Mammary epithelial cell (primary cell): ENCODE measurements at regions of chr10 and their contacts with region 1.

Region 1: DNA sequence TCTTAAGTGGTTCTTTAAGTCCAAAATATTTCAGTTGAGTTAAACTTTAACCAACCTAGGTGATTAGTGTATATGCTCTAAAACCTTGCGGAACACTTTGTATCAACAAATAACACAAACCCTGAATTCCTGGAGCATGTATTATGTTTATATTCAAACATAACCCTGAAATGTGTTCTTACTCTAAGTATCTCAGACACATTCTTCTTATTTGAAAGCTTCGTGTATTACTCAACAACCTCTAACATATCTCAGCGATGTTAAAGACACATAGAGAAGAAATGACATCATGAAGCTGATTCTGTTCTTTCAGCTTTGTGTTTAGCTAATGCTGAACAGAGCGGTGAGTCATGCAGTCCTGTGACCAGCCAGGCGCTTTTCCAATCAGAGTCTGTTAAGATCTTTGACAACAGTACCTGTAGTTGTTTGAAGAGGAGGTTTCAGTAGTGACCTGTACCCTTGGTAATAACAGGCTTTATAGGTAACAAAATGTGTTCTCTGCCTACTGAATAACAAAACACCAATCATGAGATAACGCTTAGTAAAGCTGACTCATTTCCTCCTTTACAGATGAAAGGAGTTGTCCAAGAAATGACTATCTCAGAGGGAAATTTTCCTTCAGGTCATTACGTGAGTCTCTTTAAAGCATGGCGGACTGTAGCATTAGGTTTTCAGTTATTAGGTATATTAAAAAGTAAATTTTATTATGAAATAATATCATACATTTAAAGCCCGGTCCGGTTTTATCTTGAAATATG is 67.3 kb upstream of the KLF6 start:
- DNase-seq: peak; percentile 100
- H3K4me3 ChIP-seq: no peak overlapping the region
- H3K27ac ChIP-seq: peak overlapping the region; percentile 99
- H3K4me1 ChIP-seq: peaks cover 39% of the 10 kb centered on the region
- H3K27me3 ChIP-seq: no peaks in the 10 kb centered on the region
- CTCF ChIP-seq: no peak

Region 2: DNA sequence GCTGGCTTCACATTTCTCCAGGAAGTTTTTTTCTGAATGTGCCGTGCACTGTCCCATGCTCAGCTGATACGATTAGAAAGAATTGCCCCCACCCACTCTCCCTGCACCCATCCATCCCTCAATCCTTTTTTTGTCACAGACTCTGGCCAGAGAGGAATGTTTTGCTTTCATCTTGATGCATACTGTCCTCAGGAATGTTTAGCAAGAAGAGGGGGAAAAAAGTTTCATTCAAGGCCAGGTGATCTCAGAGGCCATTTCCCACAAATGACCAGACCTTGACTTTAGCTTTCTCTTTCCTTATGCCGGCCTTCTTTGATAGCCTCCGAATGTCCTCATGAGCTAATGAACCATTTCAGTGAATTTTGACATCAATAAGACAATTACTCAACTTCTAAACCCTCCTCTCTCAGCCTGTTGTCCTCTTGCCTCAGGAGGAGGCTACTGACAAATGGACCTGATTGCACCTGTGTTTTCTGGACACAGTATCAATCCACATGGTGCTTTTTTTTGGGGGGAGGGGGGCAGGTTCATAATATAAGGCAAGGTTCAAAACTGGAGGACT is 37.7 kb after region 1 on chr10:
- CTCF ChIA-PET with region 1: no interaction called
- dilution Hi-C with region 1: loop called (anchors 5 kb)
- in situ Hi-C with region 1: no loop called
- intact Hi-C with region 1: no loop called
- DNase-seq: peak; percentile 83
- H3K4me3 ChIP-seq: no peak overlapping the region
- H3K27ac ChIP-seq: peak overlapping the region; percentile 96
- H3K4me1 ChIP-seq: peaks cover 52% of the 10 kb centered on the region
- H3K27me3 ChIP-seq: no peaks in the 10 kb centered on the region
- CTCF ChIP-seq: no peak

Region 3: GRCh38 chr10:3895045-3895631 is 42.8 kb after region 1 on chr10:
- CTCF ChIA-PET with region 1: no interaction called
- dilution Hi-C with region 1: loop called (anchors 5 kb)
- in situ Hi-C with region 1: no loop called
- intact Hi-C with region 1: loop called (anchors 1 kb)
- DNase-seq: peak; percentile 80
- H3K4me3 ChIP-seq: no peak overlapping the region
- H3K27ac ChIP-seq: peak overlapping the region; percentile 60
- H3K4me1 ChIP-seq: peaks cover 50% of the 10 kb centered on the region
- H3K27me3 ChIP-seq: no peaks in the 10 kb centered on the region
- CTCF ChIP-seq: no peak

Region 4: GRCh38 chr10:3911713-3912442 is 59.6 kb after region 1 on chr10:
- CTCF ChIA-PET with region 1: no interaction called
- dilution Hi-C with region 1: no loop called
- in situ Hi-C with region 1: no loop called
- intact Hi-C with region 1: loop called (anchors 1 kb)
- DNase-seq: peak; percentile 85
- H3K4me3 ChIP-seq: peak overlapping the region; percentile 25 to 38 (median 32)
- H3K27ac ChIP-seq: peak overlapping the region; percentile 93
- H3K4me1 ChIP-seq: peaks cover 14% of the 10 kb centered on the region
- H3K27me3 ChIP-seq: no peaks in the 10 kb centered on the region
- CTCF ChIP-seq: no peak